Activated CD4-positive, alpha-beta T cell treated with anti-CD3 and anti-CD28 coated beads, Interleukin-2, amount 10 ng/mL, durations not matched to agents 24 days and 14 days (primary cell): ENCODE measurements at regions of chr7 and their contacts with region 1.

Region 1: DNA sequence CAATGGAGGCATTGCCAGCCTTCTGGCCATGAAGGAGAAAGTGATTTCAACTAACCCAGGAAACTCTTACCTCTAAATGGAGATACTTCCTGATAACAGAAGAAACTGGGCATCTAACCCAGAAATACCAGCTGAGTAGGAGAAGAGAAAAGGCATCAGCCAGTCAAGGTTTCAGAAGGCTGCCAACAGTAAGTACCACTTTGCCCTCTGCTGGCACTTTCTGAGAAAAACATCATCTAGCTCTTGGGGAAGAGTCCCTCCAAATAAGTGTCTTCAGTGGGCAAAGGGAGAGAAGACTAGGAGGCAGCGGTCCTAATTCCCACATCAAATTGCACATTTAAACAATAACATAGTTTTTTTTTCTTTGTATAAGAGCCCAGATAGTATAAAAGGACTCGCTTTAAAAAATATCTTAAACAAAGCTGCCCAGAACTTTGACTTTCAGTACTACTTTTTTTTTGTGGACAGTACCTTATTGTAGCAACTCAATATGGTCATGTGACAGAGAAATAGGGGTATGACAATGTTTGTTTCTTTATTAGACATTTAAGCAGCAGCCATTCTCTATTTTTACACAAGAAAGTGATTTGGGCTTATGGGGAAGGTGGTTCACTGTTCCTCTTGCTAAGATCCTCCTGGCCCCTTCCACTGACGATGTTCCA is 157.3 kb downstream of the CTTNBP2 start:
- DNase-seq: peak; percentile 63
- H3K4me3 Mint-ChIP-seq: no peak overlapping the region
- H3K27ac Mint-ChIP-seq: no peak overlapping the region
- H3K4me1 Mint-ChIP-seq: peaks cover 2% of the 10 kb centered on the region
- H3K27me3 Mint-ChIP-seq: peaks cover 3% of the 10 kb centered on the region

Region 2: GRCh38 chr7:117212969-117213877 is 502.7 kb before region 1 on chr7:
- intact Hi-C with region 1: loop called (anchors 10 kb)
- DNase-seq: peak; percentile 79
- H3K4me3 Mint-ChIP-seq: no peak overlapping the region
- H3K27ac Mint-ChIP-seq: no peak overlapping the region
- H3K4me1 Mint-ChIP-seq: no peaks in the 10 kb centered on the region
- H3K27me3 Mint-ChIP-seq: no peaks in the 10 kb centered on the region

Region 3: GRCh38 chr7:117399820-117400422 is 316.0 kb before region 1 on chr7:
- intact Hi-C with region 1: loop called (anchors 10 kb)
- DNase-seq: no peak
- H3K4me3 Mint-ChIP-seq: no peak overlapping the region
- H3K27ac Mint-ChIP-seq: no peak overlapping the region
- H3K4me1 Mint-ChIP-seq: no peaks in the 10 kb centered on the region
- H3K27me3 Mint-ChIP-seq: no peaks in the 10 kb centered on the region

Region 4: DNA sequence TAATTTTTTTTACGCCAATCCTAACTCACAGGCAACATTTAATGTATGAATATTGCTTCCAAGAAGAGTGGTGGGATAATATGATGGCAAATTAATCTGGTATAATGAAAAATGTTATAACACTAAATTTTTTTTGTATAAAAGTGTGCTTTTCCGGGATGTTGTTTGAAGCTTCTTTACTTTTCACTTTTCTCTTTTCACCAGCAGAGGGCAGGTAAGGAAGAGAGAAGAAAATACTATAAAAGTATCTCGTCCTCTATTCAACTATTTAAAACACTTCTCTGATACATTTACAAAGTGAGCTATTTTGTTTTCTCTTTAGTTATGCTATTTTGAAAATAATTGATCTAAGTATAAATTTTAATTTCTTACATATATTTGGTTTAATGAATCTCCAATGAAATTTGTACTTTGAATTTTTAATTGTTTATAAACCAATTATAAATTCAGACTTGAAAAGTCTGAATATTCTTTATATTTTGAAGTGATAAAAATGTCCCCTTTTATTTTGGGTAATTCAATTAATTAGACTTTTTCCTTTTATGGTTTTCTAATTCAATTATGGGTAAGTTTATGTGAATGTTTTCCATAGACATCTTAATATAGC is 256.8 kb before region 1 on chr7:
- intact Hi-C with region 1: loop called (anchors 5 kb)
- DNase-seq: no peak
- H3K4me3 Mint-ChIP-seq: no peak overlapping the region
- H3K27ac Mint-ChIP-seq: no peak overlapping the region
- H3K4me1 Mint-ChIP-seq: no peaks in the 10 kb centered on the region
- H3K27me3 Mint-ChIP-seq: no peaks in the 10 kb centered on the region

Region 5: DNA sequence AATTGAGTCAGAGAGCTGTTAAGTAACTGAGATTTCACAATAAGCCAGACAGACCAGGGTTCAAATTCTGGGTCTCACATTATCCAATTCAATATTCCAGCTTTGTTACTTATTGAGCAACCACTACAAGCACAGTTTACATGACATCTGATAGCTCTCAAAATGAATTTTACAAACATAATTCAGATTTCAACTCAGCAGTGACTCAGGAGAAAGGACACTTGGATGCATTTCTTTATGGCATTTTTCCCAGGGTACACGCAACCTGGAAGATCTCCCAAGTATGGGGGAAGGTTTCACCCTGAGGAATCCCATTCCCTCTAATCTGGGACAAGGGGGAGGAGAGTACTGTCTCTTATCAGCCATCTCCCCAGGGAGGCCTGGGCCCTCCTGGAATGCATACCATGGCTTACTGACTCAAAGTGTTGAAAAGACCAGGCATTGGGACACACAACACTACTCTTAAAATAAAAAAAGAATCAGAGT is 133.7 kb before region 1 on chr7:
- intact Hi-C with region 1: no loop called
- DNase-seq: no peak
- H3K4me3 Mint-ChIP-seq: no peak overlapping the region
- H3K27ac Mint-ChIP-seq: no peak overlapping the region
- H3K4me1 Mint-ChIP-seq: no peaks in the 10 kb centered on the region
- H3K27me3 Mint-ChIP-seq: peaks cover 2% of the 10 kb centered on the region

Region 6: DNA sequence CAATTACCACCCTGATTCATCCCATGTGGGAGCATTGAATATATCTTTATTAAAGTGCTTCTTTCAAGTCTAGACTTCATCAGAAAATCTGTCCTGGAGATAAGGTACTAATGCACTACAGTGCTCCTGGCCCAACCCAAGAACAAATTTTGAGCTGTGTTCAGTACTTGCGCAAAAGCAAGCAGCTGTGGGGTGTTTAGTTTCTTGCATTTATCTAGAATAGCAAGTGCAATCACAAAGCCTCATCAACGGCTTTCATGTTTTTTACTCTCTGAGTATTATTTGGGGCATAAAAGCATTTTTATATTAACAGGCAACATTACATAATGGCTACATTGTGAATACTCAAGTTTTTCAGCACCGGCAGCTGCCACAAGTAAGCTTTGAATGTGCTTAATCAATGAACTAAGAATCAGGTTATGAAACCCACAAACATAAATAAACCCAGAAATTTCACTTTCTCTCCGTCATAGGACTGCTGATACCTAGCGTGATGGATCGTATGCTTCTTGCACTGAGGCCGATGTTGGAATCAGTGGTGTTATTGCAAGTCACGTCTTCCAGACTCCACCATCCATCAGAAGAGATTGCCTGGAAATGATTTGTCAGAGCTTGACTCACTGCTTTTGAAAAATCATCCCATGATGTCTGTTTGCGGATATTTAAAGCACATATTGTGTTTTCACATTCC is 44.2 kb after region 1 on chr7:
- intact Hi-C with region 1: no loop called
- DNase-seq: no peak
- H3K4me3 Mint-ChIP-seq: no peak overlapping the region
- H3K27ac Mint-ChIP-seq: no peak overlapping the region
- H3K4me1 Mint-ChIP-seq: no peaks in the 10 kb centered on the region
- H3K27me3 Mint-ChIP-seq: no peaks in the 10 kb centered on the region

Region 7: GRCh38 chr7:119046068-119046467 is 1330.2 kb after region 1 on chr7:
- intact Hi-C with region 1: no loop called
- DNase-seq: no peak
- H3K4me3 Mint-ChIP-seq: no peak overlapping the region
- H3K27ac Mint-ChIP-seq: no peak overlapping the region
- H3K4me1 Mint-ChIP-seq: no peaks in the 10 kb centered on the region
- H3K27me3 Mint-ChIP-seq: no peaks in the 10 kb centered on the region